Left ventricle myocardium inferior (tissue), 1 donor: ENCODE measurements at regions of chr2 and their contacts with region 1.

Region 1: GRCh38 chr2:177217247-177217843 is 4.8 kb downstream of the HNRNPA3 start:
- DNase-seq: no peak
- H3K4me3 ChIP-seq: no peak overlapping the region
- H3K27ac ChIP-seq: no peak overlapping the region
- H3K4me1 ChIP-seq: peaks cover 84% of the 10 kb centered on the region
- H3K27me3 ChIP-seq: no peaks in the 10 kb centered on the region
- CTCF ChIP-seq: no peak

Region 2: DNA sequence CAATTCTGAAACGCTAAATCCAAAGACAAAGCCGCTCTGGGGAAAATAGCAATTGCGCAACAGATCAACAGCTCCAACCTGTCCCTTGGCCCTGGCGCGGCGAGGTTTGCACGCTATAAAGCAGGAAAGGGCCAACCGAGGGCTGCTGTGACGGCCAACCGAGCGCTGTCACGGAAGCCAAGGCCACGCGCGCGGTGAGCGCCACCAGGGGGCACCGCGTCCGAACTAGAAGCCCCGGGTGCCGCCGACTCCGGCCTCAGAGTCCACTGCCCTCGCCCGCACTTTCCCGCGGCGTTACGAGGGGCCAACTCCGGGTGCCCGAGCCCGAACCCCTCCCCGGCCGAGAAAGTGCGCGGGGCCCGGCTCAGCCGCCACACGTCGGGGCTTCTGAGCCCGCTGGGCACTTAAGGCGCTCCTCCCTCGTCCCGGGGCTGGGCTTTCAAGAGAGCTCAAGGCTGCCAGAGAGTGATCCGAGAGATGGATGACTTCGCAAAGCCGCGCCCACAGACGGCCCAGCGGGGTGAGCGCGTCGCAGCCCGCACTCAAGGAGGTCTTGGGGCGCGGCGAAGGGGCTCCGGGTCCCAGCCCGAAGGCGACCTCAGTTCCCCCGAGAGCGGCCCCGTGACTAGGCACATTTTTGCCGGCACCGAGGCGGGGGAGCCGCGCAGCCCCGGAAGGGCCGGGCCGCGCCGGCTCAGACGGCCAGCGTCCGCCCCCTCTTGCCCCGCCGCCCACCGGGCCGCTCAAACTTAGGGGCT is 46.3 kb after region 1 on chr2:
- intact Hi-C with region 1: loop called (anchors 5 kb)
- DNase-seq: peak; percentile 99
- H3K4me3 ChIP-seq: peak overlapping the region; percentile 90
- H3K27ac ChIP-seq: peak overlapping the region; percentile 100
- H3K4me1 ChIP-seq: peaks cover 76% of the 10 kb centered on the region
- H3K27me3 ChIP-seq: no peaks in the 10 kb centered on the region
- CTCF ChIP-seq: peak; percentile 90